ENCODE measurements at regions of chr1 and their contacts with region 1.

Region 1: GRCh38 chr1:228004331-228004855 is 2.4 kb upstream of the WNT3A start:
- DNase-seq: peak; percentile 50
- ATAC-seq: peak; percentile 66
- H3K4me3 Mint-ChIP-seq: 0 out of 2 replicates have a peak overlapping the region, but pooled peaks have one; percentile 33
- H3K27ac Mint-ChIP-seq: no peak overlapping the region
- H3K4me1 Mint-ChIP-seq: peaks cover 35% of the 10 kb centered on the region
- H3K27me3 Mint-ChIP-seq: peaks cover 95% of the 10 kb centered on the region
- CTCF ChIP-seq: peak; percentile 45

Region 2: GRCh38 chr1:227855687-227856086 is 148.7 kb before region 1 on chr1:
- CTCF ChIA-PET with region 1: no interaction called
- POLR2A ChIA-PET with region 1: no interaction called
- DNase-seq: no peak
- ATAC-seq: no peak
- H3K4me3 Mint-ChIP-seq: no peak overlapping the region
- H3K27ac Mint-ChIP-seq: no peak overlapping the region
- H3K4me1 Mint-ChIP-seq: no peaks in the 10 kb centered on the region
- H3K27me3 Mint-ChIP-seq: peaks cover 7% of the 10 kb centered on the region
- CTCF ChIP-seq: no peak

Region 3: DNA sequence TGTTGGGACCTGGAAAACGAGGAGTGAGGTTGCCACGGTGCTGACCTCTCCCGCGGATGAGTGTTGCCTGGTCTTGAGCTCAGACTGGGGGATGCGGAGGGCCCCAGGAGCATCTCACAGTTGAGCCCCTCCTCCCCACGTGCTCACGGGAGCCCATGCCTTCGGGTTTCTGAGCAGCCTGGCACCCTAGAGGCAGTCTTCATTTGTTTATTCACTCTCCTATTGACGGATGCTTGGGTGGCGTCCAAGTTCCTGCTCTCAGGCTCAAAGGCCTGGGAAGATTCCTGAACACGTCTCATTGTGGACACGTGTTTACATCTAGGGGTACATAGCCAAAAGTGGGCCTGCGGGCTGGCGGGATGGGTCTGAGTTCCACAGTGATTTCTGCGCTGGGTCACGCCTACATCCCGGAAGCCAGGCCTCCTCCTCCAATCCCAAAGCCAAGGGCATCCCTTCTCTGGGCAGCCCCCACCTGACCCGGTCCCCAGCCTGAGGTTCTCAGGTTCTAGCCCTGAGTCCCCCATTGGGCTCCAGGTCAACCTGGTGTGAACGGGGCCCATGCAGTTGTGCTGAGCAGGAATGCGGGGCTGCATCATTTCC is 17.1 kb after region 1 on chr1:
- CTCF ChIA-PET with region 1: interaction called, 12 read pairs
- POLR2A ChIA-PET with region 1: no interaction called
- DNase-seq: peak; percentile 10
- ATAC-seq: no peak; the same call in 1 of the 2 replicates
- H3K4me3 Mint-ChIP-seq: no peak overlapping the region
- H3K27ac Mint-ChIP-seq: no peak overlapping the region
- H3K4me1 Mint-ChIP-seq: no peaks in the 10 kb centered on the region
- H3K27me3 Mint-ChIP-seq: peaks cover 38% of the 10 kb centered on the region
- CTCF ChIP-seq: no peak

Region 4: GRCh38 chr1:228044961-228045360 is 40.6 kb after region 1 on chr1:
- CTCF ChIA-PET with region 1: interaction called, 11 read pairs
- POLR2A ChIA-PET with region 1: no interaction called
- DNase-seq: no peak
- ATAC-seq: peak; percentile 21
- H3K4me3 Mint-ChIP-seq: no peak overlapping the region
- H3K27ac Mint-ChIP-seq: no peak overlapping the region
- H3K4me1 Mint-ChIP-seq: peaks cover 13% of the 10 kb centered on the region; the same call in 1 of the 2 replicates
- H3K27me3 Mint-ChIP-seq: peaks cover 47% of the 10 kb centered on the region
- CTCF ChIP-seq: no peak

Region 5: DNA sequence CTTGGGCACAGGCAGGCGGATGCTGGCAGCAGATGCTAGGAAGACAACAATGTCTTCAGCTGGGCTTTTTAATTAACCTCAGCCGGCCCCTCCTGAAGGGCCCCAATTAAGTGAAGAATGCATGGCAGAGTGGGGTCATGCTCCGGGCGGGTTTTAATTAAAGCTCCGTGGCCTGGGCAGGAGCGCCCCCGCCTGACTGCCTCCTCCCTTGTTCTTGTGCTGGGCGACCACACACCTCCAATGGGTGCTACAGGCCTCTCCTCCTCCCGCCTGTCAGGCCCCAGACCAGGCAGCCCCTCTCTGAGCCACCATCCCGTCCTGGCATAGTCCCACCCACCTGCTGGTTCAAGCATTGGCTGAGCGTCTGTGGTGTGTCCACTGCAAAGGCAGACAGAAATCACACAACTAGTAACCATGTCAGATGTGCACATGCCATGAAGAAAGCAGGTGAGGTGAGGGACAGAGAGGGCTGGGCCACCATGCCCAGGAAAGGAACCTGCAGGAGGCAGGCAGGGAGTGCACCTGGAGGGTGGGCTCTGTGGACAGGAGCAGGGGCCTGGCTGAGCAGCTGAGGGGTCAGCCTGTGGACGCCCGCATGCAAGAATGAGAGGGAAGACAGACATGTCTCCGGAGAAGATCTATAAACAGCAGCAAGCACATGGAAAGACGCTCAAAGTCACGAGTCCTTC is 69.6 kb after region 1 on chr1:
- CTCF ChIA-PET with region 1: interaction called, 62 read pairs
- POLR2A ChIA-PET with region 1: no interaction called
- DNase-seq: peak; percentile 67
- ATAC-seq: peak; percentile 77
- H3K4me3 Mint-ChIP-seq: no peak overlapping the region
- H3K27ac Mint-ChIP-seq: no peak overlapping the region
- H3K4me1 Mint-ChIP-seq: peaks cover 8% of the 10 kb centered on the region
- H3K27me3 Mint-ChIP-seq: peaks cover 92% of the 10 kb centered on the region
- CTCF ChIP-seq: 0 out of 2 replicates have a peak, but pooled peaks have one; percentile 13

Region 6: DNA sequence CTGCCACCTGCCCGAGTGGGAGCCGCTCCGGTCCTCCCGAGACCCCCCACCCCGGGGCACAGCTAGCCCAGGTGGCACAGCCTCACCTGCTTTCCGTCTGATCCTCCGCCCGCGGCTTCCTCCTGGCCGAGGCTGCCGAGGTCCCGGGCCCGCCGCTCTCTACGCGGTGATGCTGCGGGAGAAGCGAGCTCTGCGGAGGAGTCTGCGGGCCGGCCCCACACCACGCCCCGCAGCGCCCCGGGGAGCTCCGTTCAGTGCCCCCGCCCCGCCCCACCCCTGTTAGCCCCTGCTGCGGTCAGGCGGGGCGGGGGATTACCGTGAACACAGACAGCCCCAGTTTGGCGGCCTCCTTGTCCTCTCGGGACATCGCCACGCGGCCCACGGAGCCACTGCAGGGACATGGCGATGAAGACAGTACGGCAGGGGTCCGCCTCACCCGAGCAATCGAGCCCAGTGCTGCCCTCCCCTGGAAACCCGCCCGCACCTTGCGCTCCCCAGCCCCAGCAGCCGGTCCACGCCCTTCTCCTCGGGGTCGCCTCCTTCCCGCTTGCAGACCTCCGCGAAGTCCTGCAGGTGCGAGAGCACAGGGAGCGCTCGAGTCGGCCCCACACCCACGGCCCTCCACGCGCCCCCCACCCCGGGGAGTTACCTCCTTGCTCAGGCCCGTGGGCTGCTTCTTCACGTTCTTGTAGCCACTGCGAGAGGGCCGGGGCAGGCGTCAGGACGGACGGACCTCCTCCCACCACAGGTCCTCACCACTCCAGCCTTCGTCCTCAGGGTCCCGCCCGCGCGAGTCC is 97.8 kb after region 1 on chr1:
- CTCF ChIA-PET with region 1: interaction called, 14 read pairs
- POLR2A ChIA-PET with region 1: interaction called, 3 read pairs
- DNase-seq: peak; percentile 51
- ATAC-seq: peak; percentile 38
- H3K4me3 Mint-ChIP-seq: peak overlapping the region; percentile 90
- H3K27ac Mint-ChIP-seq: no peak overlapping the region
- H3K4me1 Mint-ChIP-seq: peaks cover 13% of the 10 kb centered on the region
- H3K27me3 Mint-ChIP-seq: peaks cover 5% of the 10 kb centered on the region; the same call in 1 of the 2 replicates
- CTCF ChIP-seq: no peak

Region 7: GRCh38 chr1:228154670-228155571 is 150.5 kb after region 1 on chr1:
- CTCF ChIA-PET with region 1: no interaction called
- POLR2A ChIA-PET with region 1: no interaction called
- DNase-seq: peak; percentile 6
- ATAC-seq: no peak
- H3K4me3 Mint-ChIP-seq: no peak overlapping the region
- H3K27ac Mint-ChIP-seq: no peak overlapping the region
- H3K4me1 Mint-ChIP-seq: no peaks in the 10 kb centered on the region
- H3K27me3 Mint-ChIP-seq: peaks cover 16% of the 10 kb centered on the region
- CTCF ChIP-seq: no peak

Measured in WTC11 (cell line).